PC-9 (cell line): ENCODE measurements at regions of chr11 and their contacts with region 1.

Region 1: GRCh38 chr11:79205786-79206185 is 235.0 kb downstream of the TENM4 start:
- DNase-seq: no peak
- H3K4me3 ChIP-seq: no peak overlapping the region
- H3K27ac ChIP-seq: no peak overlapping the region
- H3K4me1 ChIP-seq: no peaks in the 10 kb centered on the region
- H3K27me3 ChIP-seq: peaks cover 41% of the 10 kb centered on the region
- CTCF ChIP-seq: no peak

Region 2: GRCh38 chr11:79294845-79295731 is 89.3 kb after region 1 on chr11:
- CTCF ChIA-PET with region 1: no interaction called
- POLR2A ChIA-PET with region 1: interaction called, 11 read pairs
- intact Hi-C with region 1: no loop called
- DNase-seq: no peak
- H3K4me3 ChIP-seq: no peak overlapping the region
- H3K27ac ChIP-seq: no peak overlapping the region
- H3K4me1 ChIP-seq: no peaks in the 10 kb centered on the region
- H3K27me3 ChIP-seq: peaks cover 32% of the 10 kb centered on the region; the same call in 1 of the 2 replicates
- CTCF ChIP-seq: no peak